ENCODE measurements at regions of chr3 and their contacts with region 1.

Region 1: DNA sequence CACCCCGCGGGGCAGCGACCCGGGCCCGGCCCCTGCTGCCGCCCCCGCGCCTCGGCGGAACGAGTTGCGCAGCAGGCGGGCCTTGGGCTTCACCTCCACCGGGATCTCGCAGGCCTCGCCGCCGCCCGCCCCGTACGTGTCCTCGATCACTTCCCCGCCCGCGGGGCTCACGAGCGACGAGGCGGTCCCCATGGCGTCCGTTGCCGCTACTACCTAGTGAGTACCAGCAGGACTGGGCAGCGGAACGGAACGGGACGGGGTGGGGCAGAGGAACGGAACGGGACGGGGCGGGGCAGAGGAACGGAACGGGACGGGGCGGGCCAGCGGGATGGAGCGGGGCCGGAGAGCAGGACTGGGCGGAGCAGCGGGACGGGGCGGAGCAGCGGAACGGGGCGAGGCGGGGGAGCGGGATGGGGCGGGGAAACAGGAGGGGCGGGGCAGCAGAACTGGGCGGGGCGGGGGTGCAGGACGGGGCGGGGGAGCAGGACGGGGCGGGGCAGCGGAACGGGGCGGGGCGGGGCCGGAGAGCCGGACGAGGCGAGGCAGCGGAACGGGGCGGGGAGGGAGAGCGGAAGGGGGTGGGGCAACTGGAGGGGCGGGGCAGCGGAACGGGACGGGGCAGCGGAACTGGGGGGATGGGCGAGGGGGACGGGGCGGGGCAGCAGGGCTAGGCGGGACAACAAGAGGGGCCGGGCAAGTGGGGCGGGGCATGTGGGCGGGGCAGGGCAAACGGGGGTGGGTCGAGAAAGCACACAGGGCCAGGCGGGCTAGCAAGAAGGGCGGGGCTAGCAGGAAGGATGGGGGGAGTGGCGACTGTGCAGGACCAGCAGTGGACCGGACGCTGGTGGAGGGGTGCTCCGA is at the start of gene NPHP3:
- DNase-seq: peak; percentile 91
- H3K4me3 ChIP-seq: peak within 1 kb of the TSS; percentile 82
- H3K27ac ChIP-seq: peak within 1 kb of the TSS; percentile 27
- H3K4me1 ChIP-seq: peaks cover 14% of the 10 kb centered on the region
- CTCF ChIP-seq: no peak
- total RNA-seq, gene NPHP3: 7.9 and 10.6 TPM in 2 replicates

Region 2: DNA sequence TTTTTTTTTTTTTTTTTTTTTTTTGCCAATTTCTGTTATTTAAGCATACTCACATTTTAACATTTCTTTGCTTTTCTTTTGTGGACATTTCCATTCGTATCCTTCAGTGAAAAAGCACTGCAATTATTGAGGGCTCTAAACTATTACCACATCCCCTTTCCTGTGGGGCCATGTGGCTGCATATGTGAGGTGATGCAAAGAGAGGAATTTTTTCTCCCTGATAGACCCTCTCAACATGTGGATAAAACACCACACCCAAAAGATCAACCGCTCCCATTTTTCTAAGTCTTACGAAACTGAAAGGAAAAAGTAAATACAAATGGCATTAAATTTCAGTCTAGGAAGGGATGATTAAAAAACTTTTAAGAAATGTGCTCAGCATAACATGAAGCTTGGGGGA is 236.3 kb before region 1 on chr3:
- CTCF ChIA-PET with region 1: no interaction called
- POLR2A ChIA-PET with region 1: no interaction called
- intact Hi-C with region 1: no loop called
- DNase-seq: no peak
- H3K4me3 ChIP-seq: no peak overlapping the region
- H3K27ac ChIP-seq: no peak overlapping the region
- H3K4me1 ChIP-seq: no peaks in the 10 kb centered on the region
- CTCF ChIP-seq: no peak

Region 3: DNA sequence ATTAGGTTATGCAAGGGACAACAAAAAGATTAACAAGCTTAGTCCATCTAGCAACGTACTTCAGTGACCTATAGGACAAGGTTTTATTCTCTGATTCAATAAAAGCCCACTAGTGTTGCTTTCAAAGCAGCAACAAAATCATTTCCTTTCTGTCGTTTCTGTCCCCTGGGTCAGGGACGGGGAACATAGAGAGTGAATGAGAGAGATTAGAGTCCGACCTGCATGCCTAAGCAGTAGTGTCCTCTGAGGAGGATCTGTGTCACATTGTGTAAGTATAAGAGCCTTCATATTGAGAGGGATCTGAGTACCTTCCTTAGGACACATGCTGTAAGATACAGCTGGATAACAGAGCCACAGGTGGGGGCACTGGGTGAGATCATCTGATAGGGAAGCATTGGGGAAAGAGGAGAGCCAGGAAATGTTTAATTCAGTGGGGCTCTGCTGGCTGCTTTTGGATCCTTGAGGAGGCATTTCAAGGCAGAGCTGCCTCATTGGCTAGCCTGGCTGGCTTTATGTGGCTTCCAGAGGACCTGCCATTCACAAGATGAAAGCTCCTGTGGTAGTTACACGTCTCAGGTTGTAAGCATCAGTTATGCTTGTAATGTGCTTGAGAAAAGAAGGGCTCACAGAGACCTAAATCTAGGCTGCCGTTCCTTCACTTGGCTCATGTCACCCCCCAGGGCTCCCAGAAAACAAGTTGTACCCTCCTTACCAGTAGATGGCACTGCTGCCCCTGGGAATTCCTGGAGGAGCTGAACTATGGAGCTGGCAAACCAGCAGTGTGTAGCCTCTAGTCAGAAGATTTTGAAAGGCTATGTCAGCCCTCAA is 318.5 kb after region 1 on chr3:
- CTCF ChIA-PET with region 1: no interaction called
- POLR2A ChIA-PET with region 1: no interaction called
- intact Hi-C with region 1: loop called (anchors 5 kb)
- DNase-seq: peak; percentile 62
- H3K4me3 ChIP-seq: no peak overlapping the region
- H3K27ac ChIP-seq: no peak overlapping the region
- H3K4me1 ChIP-seq: no peaks in the 10 kb centered on the region
- CTCF ChIP-seq: peak; percentile 84

Region 4: GRCh38 chr3:133384331-133385027 is 662.1 kb after region 1 on chr3:
- CTCF ChIA-PET with region 1: no interaction called
- POLR2A ChIA-PET with region 1: no interaction called
- intact Hi-C with region 1: loop called (anchors 5 kb)
- DNase-seq: peak; percentile 50
- H3K4me3 ChIP-seq: no peak overlapping the region
- H3K27ac ChIP-seq: no peak overlapping the region
- H3K4me1 ChIP-seq: peaks cover 8% of the 10 kb centered on the region
- CTCF ChIP-seq: peak; percentile 83

Region 5: GRCh38 chr3:133573054-133573628 is 850.7 kb after region 1 on chr3:
- CTCF ChIA-PET with region 1: no interaction called
- POLR2A ChIA-PET with region 1: interaction called, 3 read pairs
- intact Hi-C with region 1: loop called (anchors 2 kb)
- DNase-seq: peak; percentile 100
- H3K4me3 ChIP-seq: peak overlapping the region; percentile 87
- H3K27ac ChIP-seq: peak overlapping the region; percentile 98
- H3K4me1 ChIP-seq: peaks cover 68% of the 10 kb centered on the region
- CTCF ChIP-seq: no peak; the same call in 1 of the 2 replicates

Region 6: DNA sequence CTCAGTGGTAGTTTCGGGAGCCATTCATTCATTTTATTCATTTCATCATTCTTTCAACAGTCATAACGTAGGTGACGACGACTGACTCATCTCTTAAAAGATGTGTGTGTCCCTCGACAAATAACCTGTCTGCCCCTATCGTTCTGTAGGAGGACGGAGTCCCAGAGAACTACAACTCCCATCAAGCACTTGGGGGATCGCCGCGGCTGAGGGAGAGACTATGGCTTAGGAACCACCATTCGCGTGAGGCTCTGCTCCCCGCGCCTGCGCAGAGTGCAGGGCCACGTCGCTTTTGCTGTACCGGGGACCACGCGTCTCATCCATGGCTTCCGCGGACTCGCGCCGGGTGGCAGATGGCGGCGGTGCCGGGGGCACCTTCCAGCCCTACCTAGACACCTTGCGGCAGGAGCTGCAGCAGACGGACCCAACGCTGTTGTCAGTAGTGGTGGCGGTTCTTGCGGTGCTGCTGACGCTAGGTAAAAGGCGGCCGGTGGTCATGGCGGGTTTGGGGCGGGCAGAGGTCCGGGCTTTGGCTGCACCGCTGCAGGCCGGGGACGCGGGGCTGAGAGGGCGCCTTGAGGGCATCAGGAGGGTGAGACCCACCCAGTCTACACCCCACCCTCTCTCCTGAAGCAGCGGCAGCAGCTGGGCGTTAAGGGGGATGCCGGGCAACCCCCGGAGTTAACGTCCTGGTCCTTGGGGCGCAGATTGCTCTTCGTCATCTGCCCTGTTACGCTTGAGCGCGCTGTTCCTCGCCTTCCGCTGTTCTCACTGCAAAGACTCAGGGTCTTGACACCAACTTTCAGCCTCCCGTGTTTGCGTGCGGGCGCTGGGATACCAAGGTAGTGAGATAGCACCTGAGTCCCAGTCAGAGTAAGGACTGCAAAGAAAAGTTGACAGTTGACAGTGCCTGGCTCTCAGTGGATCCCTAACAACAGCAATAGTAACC is 1083.4 kb after region 1 on chr3 and contains the start of gene SRPRB:
- CTCF ChIA-PET with region 1: no interaction called
- POLR2A ChIA-PET with region 1: no interaction called
- intact Hi-C with region 1: loop called (anchors 5 kb)
- DNase-seq: peak; percentile 96
- H3K4me3 ChIP-seq: peak within 1 kb of the TSS; percentile 87
- H3K27ac ChIP-seq: peak within 1 kb of the TSS; percentile 28
- H3K4me1 ChIP-seq: peaks cover 23% of the 10 kb centered on the region
- CTCF ChIP-seq: no peak
- total RNA-seq, gene SRPRB: 36.0 and 39.4 TPM in 2 replicates